GM13976 (cell line): ENCODE measurements at regions of chr3 and their contacts with region 1.

Region 1: DNA sequence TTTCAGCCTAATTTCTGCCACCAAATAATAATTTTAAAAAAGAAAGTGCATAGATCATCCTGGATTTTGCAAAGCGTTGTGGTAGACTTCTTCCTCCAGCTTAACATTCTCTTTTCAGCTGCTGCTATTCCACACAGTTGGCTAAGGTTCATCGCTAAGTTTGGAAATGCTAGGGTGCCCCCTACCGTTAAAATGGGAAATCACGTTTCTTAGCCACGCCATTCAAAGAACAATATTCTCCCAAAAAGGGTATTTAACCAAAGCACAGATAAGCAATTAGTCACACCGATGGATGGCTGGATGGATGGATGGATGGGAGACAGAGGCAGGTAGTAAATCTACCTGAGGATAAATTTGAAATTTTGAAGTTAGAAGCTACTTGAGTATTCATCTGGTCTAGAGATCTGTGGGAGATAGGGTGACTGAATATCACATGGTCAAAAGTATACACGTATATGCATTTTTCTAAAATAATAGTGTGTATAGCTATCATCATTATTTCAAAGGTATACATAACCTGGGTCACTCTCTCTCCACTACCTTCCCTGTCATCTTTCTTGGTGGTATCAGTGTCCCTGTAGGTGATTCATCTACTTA is 67.2 kb downstream of the EFHB start:
- DNase-seq: peak; percentile 63
- CTCF ChIP-seq: peak; percentile 68

Region 2: GRCh38 chr3:19065027-19065426 is 801.8 kb before region 1 on chr3:
- in situ Hi-C with region 1: loop called (anchors 25 kb)
- DNase-seq: no peak
- CTCF ChIP-seq: no peak

Region 3: GRCh38 chr3:19213601-19214220 is 653.1 kb before region 1 on chr3:
- in situ Hi-C with region 1: loop called (anchors 25 kb)
- DNase-seq: no peak
- CTCF ChIP-seq: no peak

Region 4: DNA sequence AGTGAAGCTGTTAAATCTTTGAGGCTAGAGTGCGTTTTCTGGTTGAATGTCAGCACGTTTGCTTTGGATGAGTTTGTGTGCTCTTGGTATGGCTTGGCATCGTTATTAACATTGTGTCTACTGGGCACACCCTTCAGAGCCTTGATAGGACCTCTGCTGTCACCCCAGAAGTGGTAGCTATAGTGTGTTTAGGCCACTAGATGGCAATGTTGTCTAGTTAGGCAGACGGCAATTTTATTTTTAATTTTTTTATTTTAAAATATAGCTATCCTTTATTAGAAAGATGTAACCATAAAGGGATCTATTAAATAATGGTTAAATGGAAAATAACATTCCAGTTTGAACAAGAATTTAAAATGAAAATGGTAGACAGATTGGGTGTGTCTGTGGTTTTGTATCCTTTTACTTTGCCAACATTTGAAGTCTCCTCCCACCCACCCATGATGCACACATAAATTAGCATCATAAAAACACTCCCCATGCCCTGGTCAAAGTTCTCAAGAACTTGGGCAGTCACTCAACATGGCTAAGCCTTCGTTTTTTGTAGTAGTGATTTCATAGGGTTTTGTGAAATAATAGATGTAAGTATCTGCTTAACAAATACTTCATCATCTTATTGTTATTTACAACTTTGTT is 517.8 kb before region 1 on chr3:
- in situ Hi-C with region 1: loop called (anchors 10 kb)
- DNase-seq: no peak
- CTCF ChIP-seq: peak; percentile 65

Region 5: GRCh38 chr3:19662486-19662885 is 204.4 kb before region 1 on chr3:
- in situ Hi-C with region 1: no loop called
- DNase-seq: no peak
- CTCF ChIP-seq: no peak